Aorta (tissue), 5 donors: ENCODE measurements at regions of chr4 and their contacts with region 1.

Region 1: DNA sequence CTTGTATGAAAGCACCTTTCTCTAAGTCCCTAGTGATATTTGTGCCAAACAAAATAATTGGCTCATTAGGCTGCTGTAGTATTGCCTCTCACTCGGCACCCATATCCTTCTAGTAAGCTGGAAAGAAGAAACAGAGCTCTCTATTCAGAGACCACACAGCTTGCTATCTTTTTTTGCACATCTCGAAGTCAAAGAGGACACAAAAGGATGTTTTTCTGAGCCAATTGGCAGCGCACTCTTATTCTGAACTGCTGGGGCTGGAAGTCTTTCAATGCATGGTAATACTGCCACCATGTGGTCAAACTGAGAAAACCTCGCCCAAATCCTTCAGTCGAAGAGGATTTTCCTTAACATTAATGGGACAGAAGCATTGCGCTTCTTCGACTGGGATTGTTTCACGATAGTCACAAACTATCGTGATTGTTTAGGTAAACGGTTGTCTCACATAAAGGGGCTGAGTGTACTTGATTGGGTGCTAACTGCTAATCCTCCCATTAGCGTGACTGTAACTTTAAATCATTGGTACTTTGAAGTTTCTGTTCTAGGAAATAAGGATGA is 572.0 kb upstream of the LCORL start:
- DNase-seq: no peak
- ATAC-seq: peak; percentile 82
- H3K4me3 ChIP-seq: no peak overlapping the region
- H3K27ac ChIP-seq: no peak overlapping the region
- H3K4me1 ChIP-seq: no peaks in the 10 kb centered on the region
- H3K27me3 ChIP-seq: no peaks in the 10 kb centered on the region

Region 2: GRCh38 chr4:17544205-17544604 is 1049.3 kb before region 1 on chr4:
- intact Hi-C with region 1: loop called (anchors 5 to 10 kb)
- DNase-seq: no peak
- ATAC-seq: no peak
- H3K4me3 ChIP-seq: no peak overlapping the region
- H3K27ac ChIP-seq: no peak overlapping the region
- H3K4me1 ChIP-seq: no peaks in the 10 kb centered on the region
- H3K27me3 ChIP-seq: peaks cover 0 to 1% of the 10 kb centered on the region in 2 donors

Region 3: DNA sequence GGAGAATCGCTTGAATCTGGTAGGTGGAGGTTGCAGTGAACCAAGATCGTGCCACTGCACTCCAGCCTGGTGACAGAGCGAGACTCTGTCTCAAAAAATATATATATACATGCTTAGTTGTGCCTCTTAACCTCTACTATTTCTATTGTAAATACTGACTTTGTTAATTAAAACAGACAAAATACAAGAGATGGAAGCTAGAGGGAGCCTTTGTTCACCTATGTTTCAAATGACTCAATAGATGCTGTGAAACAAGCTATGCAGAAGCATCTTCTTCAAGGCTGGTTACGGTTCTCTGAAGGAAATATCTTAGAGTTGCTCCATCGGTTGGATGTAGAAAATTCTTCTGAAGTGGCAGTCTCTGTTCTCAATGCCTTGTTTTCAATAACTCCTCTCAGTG is 776.5 kb before region 1 on chr4:
- intact Hi-C with region 1: loop called (anchors 5 to 10 kb)
- DNase-seq: no peak
- ATAC-seq: no peak
- H3K4me3 ChIP-seq: no peak overlapping the region
- H3K27ac ChIP-seq: no peak overlapping the region
- H3K4me1 ChIP-seq: no peaks in the 10 kb centered on the region
- H3K27me3 ChIP-seq: no peaks in the 10 kb centered on the region